ENCODE measurements at regions of chr9 and their contacts with region 1.

Region 1: DNA sequence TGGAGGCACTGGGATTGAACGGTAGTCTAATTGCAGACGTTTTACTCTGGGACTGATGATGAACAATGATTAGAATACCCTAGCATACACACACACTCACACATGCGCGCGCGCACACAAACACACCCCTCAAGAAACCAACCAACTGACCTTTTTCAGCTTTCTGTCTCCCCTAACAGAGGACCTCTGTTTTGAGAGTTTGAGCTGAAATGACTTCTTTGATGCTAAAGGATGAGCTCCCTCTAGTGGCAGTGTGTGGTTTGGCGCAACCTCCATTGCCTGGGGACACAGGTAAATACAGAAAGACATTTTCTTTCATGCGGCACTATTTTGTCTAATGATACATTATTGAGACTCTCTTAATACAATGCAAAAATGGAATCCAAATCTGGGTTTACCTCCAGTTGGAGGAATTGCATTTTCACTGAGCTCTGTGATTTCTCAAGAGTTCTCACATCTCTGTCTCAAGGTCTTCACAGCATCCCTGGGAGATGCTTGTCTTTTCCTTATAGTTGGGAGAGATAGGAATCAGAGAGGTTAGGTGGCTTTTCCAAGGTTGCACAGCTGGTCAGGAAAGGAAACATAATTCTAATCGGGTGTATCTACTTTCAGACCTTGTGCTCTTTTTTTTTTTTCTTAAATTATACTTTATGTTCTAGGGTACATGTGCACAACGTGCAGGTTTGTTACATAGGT is 187.5 kb downstream of the TMEM38B start:
- DNase-seq: peak; percentile 71
- H3K4me3 Mint-ChIP-seq: no peak overlapping the region
- H3K27ac Mint-ChIP-seq: no peak overlapping the region
- H3K4me1 Mint-ChIP-seq: peaks cover 26% of the 10 kb centered on the region
- H3K27me3 Mint-ChIP-seq: peaks cover 16% of the 10 kb centered on the region

Region 2: GRCh38 chr9:105842023-105842644 is 39.7 kb before region 1 on chr9:
- CTCF ChIA-PET with region 1: interaction called, 79 read pairs
- POLR2A ChIA-PET with region 1: no interaction called
- DNase-seq: peak; percentile 24
- H3K4me3 Mint-ChIP-seq: no peak overlapping the region
- H3K27ac Mint-ChIP-seq: no peak overlapping the region
- H3K4me1 Mint-ChIP-seq: no peaks in the 10 kb centered on the region
- H3K27me3 Mint-ChIP-seq: peaks cover 2% of the 10 kb centered on the region

Region 3: DNA sequence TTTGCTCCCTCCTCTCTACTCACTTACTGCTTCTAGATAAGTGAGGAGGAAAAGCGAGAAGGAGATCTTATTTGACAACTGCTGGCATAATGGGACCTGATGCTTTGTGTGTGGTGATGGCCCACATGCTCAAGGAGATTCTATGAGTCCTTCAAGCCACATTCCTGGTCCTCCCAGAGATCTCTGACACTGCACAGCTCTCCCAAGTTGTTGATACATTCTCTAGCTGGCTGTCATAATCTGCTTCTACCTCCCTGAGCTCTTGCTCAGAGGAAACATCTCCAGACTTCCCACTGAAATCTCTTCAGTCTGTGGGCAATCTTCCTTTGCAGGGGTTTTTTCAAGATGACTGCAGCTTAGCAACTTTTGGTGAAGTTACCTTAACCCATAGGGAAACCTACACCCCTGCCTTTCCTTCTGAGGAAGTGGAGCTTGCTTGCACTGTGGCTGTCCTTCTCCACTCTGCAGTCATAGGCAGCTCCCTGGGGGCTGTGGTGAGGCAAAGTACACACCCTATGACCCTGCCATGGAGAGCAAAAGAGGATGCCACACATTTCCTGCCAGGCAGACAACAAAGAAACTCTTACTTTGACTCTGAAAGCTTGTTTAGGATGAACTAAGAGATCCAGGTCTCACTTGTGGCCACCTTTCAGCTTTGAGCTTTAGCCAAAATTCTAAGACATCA is 23.7 kb before region 1 on chr9:
- CTCF ChIA-PET with region 1: interaction called, 14 read pairs
- POLR2A ChIA-PET with region 1: no interaction called
- DNase-seq: peak; percentile 20
- H3K4me3 Mint-ChIP-seq: no peak overlapping the region
- H3K27ac Mint-ChIP-seq: peak overlapping the region; percentile 56
- H3K4me1 Mint-ChIP-seq: peaks cover 22% of the 10 kb centered on the region
- H3K27me3 Mint-ChIP-seq: peaks cover 8% of the 10 kb centered on the region

Region 4: GRCh38 chr9:105865285-105865684 is 16.5 kb before region 1 on chr9:
- CTCF ChIA-PET with region 1: interaction called, 10 read pairs
- POLR2A ChIA-PET with region 1: no interaction called
- DNase-seq: no peak
- H3K4me3 Mint-ChIP-seq: no peak overlapping the region
- H3K27ac Mint-ChIP-seq: no peak overlapping the region
- H3K4me1 Mint-ChIP-seq: no peaks in the 10 kb centered on the region
- H3K27me3 Mint-ChIP-seq: peaks cover 6% of the 10 kb centered on the region

Region 5: GRCh38 chr9:105901514-105902109 is 19.8 kb after region 1 on chr9:
- CTCF ChIA-PET with region 1: interaction called, 10 read pairs
- POLR2A ChIA-PET with region 1: interaction called, 3 read pairs
- DNase-seq: no peak
- H3K4me3 Mint-ChIP-seq: no peak overlapping the region
- H3K27ac Mint-ChIP-seq: peak overlapping the region; percentile 14
- H3K4me1 Mint-ChIP-seq: no peaks in the 10 kb centered on the region
- H3K27me3 Mint-ChIP-seq: peaks cover 7% of the 10 kb centered on the region

Measured in activated CD4-positive, alpha-beta memory T cell treated with anti-CD3 and anti-CD28 coated beads, Interleukin-2, amount 10 ng/mL, durations not matched to agents 7 days and 5 days (primary cell).